Naive thymus-derived CD4-positive, alpha-beta T cell (primary cell): ENCODE measurements at regions of chr5 and their contacts with region 1.

Region 1: DNA sequence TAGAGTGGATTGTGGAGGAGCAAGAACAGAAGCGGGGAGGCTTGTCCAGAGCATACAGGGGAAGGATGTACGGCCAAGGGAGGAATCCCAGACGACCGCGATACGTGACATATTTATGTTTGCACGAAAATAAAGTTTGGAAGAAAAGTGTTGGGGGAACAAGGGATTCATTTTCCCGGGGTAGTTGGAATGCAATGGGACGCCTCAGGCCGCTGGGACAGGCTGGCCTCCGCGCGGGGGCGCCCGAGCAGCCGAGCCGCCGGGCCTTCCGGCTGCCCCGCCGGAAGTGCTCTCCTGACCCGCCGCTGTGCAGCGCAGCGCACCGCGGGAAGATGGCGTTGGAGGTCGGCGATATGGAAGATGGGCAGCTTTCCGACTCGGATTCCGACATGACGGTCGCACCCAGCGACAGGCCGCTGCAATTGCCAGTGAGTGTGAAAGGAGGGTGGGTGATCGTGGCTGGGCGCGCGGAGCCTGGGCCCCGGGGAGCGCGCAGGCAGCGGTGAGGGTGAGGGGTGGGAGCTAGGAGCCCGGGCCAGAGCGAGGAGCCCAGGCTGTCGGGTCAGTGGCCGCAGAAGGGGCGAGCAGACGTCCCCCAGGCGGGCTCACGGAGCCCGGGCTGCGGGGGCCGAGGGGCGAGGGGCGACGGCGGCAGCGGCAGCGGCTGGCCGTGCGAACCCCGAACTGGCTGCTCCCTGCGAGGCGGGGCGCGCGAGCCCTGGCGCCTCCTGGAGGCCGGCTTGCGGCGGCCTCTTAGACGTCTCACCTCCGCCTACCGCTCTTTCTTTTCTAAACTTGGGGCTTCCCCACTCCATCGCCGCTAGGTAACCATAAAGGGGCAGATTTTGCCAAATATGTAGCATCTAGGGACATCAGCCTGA is at the start of gene PHAX:
- DNase-seq: peak; percentile 59 to 82 (median 70)
- ATAC-seq: peak; percentile 95
- H3K4me3 ChIP-seq: peak within 1 kb of the TSS; percentile 84
- H3K4me3 Mint-ChIP-seq: peak within 1 kb of the TSS; percentile 84 to 99 (median 96)
- H3K27ac ChIP-seq: peak within 1 kb of the TSS; percentile 78
- H3K27ac Mint-ChIP-seq: peak within 1 kb of the TSS; percentile 86 to 98 (median 93)
- H3K4me1 ChIP-seq: peaks cover 14 to 15% of the 10 kb centered on the region in 2 donors
- H3K4me1 Mint-ChIP-seq: peaks cover 12 to 42% (median 35%) of the 10 kb centered on the region in 7 donors
- H3K27me3 ChIP-seq: no peaks in the 10 kb centered on the region
- H3K27me3 Mint-ChIP-seq: peaks cover 0 to 10% (median 0%) of the 10 kb centered on the region in 5 donors
- total RNA-seq, gene PHAX: 14.5 to 40.9 (median 35.4) TPM

Region 2: GRCh38 chr5:126354012-126354857 is 246.6 kb before region 1 on chr5:
- CTCF ChIA-PET with region 1: interaction called, 6 read pairs
- POLR2A ChIA-PET with region 1: no interaction called
- intact Hi-C with region 1: loop called (anchors 1 kb)
- DNase-seq: peak in 7 of 9 donors; percentile 26 to 66 (median 53)
- ATAC-seq: peak; percentile 78
- H3K4me3 ChIP-seq: no peak overlapping the region
- H3K4me3 Mint-ChIP-seq: peak overlapping the region; percentile 12 to 80 (median 72)
- H3K27ac ChIP-seq: no peak overlapping the region
- H3K27ac Mint-ChIP-seq: peak overlapping the region in 7 of 9 donors; percentile 19 to 65 (median 36)
- H3K4me1 ChIP-seq: peaks cover 0 to 12% of the 10 kb centered on the region in 2 donors
- H3K4me1 Mint-ChIP-seq: peaks cover 3 to 21% (median 15%) of the 10 kb centered on the region in 7 donors
- H3K27me3 ChIP-seq: no peaks in the 10 kb centered on the region
- H3K27me3 Mint-ChIP-seq: peaks cover 0 to 16% (median 0%) of the 10 kb centered on the region in 5 donors

Region 3: DNA sequence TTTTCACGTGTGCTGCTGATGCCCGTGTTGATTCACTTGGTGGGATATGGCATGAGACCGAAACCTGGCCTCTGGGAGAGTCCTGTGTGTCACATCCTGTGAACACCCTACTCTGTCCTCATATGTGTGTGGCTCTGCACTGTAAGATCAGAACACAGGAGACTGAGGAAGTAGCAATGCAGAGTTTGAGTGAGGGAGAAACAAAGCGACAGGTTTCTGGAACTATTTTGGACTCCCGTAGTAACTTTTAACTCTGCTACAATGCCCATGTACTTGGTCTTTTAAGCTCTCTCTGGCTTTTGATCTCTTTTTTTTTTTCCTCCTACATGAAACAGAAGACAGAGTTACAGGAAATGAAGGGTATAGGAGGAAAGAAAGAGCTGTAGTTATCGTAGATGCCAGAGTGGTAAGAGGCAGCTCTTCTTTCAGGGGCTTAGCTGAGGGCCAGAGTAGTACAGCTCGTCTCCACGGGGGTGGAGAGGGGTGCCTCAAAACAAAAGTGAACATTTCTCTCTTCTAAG is 151.1 kb before region 1 on chr5:
- CTCF ChIA-PET with region 1: interaction called, 8 read pairs
- POLR2A ChIA-PET with region 1: interaction called, 3 read pairs
- intact Hi-C with region 1: loop called in 1 of 2 experiments (anchors 2 kb)
- DNase-seq: peak in 8 of 9 donors; percentile 48 to 75 (median 64)
- ATAC-seq: peak; percentile 87
- H3K4me3 ChIP-seq: peak overlapping the region; percentile 47
- H3K4me3 Mint-ChIP-seq: peak overlapping the region; percentile 75 to 94 (median 88)
- H3K27ac ChIP-seq: peak overlapping the region; percentile 77
- H3K27ac Mint-ChIP-seq: peak overlapping the region; percentile 96 to 100 (median 99)
- H3K4me1 ChIP-seq: peaks cover 11 to 57% of the 10 kb centered on the region in 2 donors
- H3K4me1 Mint-ChIP-seq: peaks cover 32 to 90% (median 75%) of the 10 kb centered on the region in 7 donors
- H3K27me3 ChIP-seq: no peaks in the 10 kb centered on the region
- H3K27me3 Mint-ChIP-seq: no peaks in the 10 kb centered on the region

Region 4: DNA sequence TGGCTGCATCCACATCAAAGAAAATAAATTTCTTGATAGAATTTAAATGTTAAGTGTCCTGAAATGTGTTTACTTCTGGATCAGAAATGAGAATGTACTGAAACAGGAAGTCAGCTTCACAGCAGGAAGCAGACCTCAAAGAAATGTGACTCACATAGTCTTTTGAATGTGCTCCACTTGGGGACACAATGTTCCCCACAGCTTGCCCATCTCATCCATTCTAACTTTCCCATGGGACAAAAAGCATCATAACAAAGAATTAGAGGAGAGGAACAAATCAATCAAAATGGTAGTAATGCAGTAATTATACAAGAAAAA is 92.0 kb before region 1 on chr5:
- CTCF ChIA-PET with region 1: no interaction called
- POLR2A ChIA-PET with region 1: no interaction called
- intact Hi-C with region 1: loop called in 1 of 2 experiments (anchors 2 kb)
- DNase-seq: peak in 6 of 9 donors; percentile 17 to 68 (median 49)
- ATAC-seq: peak; percentile 81
- H3K4me3 ChIP-seq: peak overlapping the region; percentile 11
- H3K4me3 Mint-ChIP-seq: peak overlapping the region; percentile 36 to 91 (median 83)
- H3K27ac ChIP-seq: peak overlapping the region; percentile 64
- H3K27ac Mint-ChIP-seq: peak overlapping the region; percentile 77 to 97 (median 93)
- H3K4me1 ChIP-seq: peaks cover 5 to 39% of the 10 kb centered on the region in 2 donors
- H3K4me1 Mint-ChIP-seq: peaks cover 11 to 75% (median 65%) of the 10 kb centered on the region in 7 donors
- H3K27me3 ChIP-seq: no peaks in the 10 kb centered on the region
- H3K27me3 Mint-ChIP-seq: no peaks in the 10 kb centered on the region

Region 5: GRCh38 chr5:126852091-126852571 is 251.3 kb after region 1 on chr5:
- CTCF ChIA-PET with region 1: no interaction called
- POLR2A ChIA-PET with region 1: no interaction called
- intact Hi-C with region 1: loop called in 1 of 2 experiments (anchors 2 kb)
- DNase-seq: peak in 7 of 9 donors; percentile 38 to 72 (median 63)
- ATAC-seq: peak; percentile 81
- H3K4me3 ChIP-seq: peak overlapping the region; percentile 13
- H3K4me3 Mint-ChIP-seq: peak overlapping the region; percentile 71 to 91 (median 84)
- H3K27ac ChIP-seq: peak overlapping the region; percentile 67
- H3K27ac Mint-ChIP-seq: peak overlapping the region; percentile 95 to 99 (median 99)
- H3K4me1 ChIP-seq: peaks cover 12 to 33% of the 10 kb centered on the region in 2 donors
- H3K4me1 Mint-ChIP-seq: peaks cover 23 to 76% (median 67%) of the 10 kb centered on the region in 7 donors
- H3K27me3 ChIP-seq: no peaks in the 10 kb centered on the region
- H3K27me3 Mint-ChIP-seq: no peaks in the 10 kb centered on the region

Region 6: DNA sequence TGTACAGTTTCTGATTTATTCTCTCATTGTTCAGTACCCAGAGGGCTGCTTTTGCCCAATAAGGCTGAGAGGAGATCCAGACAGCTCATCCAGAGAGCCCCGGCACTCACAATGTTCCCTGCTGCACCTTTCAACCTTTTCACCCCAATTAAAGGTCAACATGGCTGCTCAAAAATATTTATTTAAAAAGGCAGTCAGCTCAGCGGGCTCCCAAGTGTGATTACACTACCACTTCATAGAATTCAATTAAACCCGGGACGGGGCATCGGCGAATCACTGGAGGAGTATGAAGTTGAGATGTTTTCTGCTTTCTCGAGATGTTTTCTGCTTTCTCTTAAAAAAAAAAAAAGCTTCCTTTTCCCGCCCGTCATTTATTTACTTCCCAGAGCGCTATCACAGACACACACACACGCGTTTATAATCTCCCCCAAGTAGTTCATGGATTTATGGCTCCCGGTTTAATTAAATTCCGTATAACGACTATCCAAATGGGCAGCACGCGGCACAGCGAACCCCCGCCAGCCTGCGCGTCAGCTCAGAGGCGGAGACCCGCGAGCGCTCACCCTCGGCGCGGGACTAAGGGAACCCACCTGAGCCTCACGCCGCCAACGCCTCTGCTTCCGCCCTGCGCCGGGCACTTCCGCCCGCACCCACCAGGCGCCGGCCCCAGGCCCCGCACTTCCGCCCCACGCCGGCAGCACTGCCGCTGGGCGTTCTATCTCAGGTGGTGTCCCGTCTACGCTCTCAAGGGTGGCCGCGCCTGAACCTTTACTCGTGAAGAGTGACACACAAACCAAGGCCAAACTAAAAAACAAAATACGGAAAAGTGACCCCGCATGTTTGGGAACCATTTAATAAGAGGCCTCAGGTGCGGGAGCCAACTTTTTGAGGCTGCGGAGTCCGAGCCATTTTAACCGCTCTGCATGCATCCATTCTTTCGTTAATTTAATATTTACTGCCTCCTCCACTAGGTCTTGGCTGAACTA is 472.3 kb after region 1 on chr5 and contains the start of gene C5orf63:
- CTCF ChIA-PET with region 1: no interaction called
- POLR2A ChIA-PET with region 1: no interaction called
- intact Hi-C with region 1: loop called in 1 of 2 experiments (anchors 5 kb)
- DNase-seq: peak; percentile 41 to 78 (median 69)
- ATAC-seq: peak; percentile 91
- H3K4me3 ChIP-seq: peak within 1 kb of the TSS; percentile 83
- H3K4me3 Mint-ChIP-seq: peak within 1 kb of the TSS; percentile 89 to 100 (median 92)
- H3K27ac ChIP-seq: peak within 1 kb of the TSS; percentile 69
- H3K27ac Mint-ChIP-seq: peak within 1 kb of the TSS; percentile 74 to 98 (median 93)
- H3K4me1 ChIP-seq: peaks cover 8 to 10% of the 10 kb centered on the region in 2 donors
- H3K4me1 Mint-ChIP-seq: peaks cover 17 to 39% (median 29%) of the 10 kb centered on the region in 7 donors
- H3K27me3 ChIP-seq: no peaks in the 10 kb centered on the region
- H3K27me3 Mint-ChIP-seq: no peaks in the 10 kb centered on the region
- total RNA-seq, gene C5orf63: 9.2 to 20.7 (median 11.9) TPM

Region 7: GRCh38 chr5:127517480-127518318 is 916.8 kb after region 1 on chr5 and contains the start of gene PRRC1:
- CTCF ChIA-PET with region 1: no interaction called
- POLR2A ChIA-PET with region 1: no interaction called
- intact Hi-C with region 1: loop called (anchors 1 to 5 kb)
- DNase-seq: peak; percentile 63 to 80 (median 74)
- ATAC-seq: peak; percentile 99
- H3K4me3 ChIP-seq: peak within 1 kb of the TSS; percentile 94
- H3K4me3 Mint-ChIP-seq: peak within 1 kb of the TSS; percentile 87 to 92 (median 89)
- H3K27ac ChIP-seq: peak within 1 kb of the TSS; percentile 89
- H3K27ac Mint-ChIP-seq: peak within 1 kb of the TSS; percentile 48 to 91 (median 82)
- H3K4me1 ChIP-seq: peaks cover 0 to 18% of the 10 kb centered on the region in 2 donors
- H3K4me1 Mint-ChIP-seq: peaks cover 25 to 48% (median 38%) of the 10 kb centered on the region in 7 donors
- H3K27me3 ChIP-seq: no peaks in the 10 kb centered on the region
- H3K27me3 Mint-ChIP-seq: peaks cover under 1 to 7% (median 6%) of the 10 kb centered on the region in 5 donors
- total RNA-seq, gene PRRC1: 34.6 to 56.6 (median 49.4) TPM

Region 8: GRCh38 chr5:127536687-127537086 is 935.8 kb after region 1 on chr5:
- CTCF ChIA-PET with region 1: no interaction called
- POLR2A ChIA-PET with region 1: no interaction called
- intact Hi-C with region 1: no loop called
- DNase-seq: peak in 2 of 9 donors; percentile 3 to 9
- ATAC-seq: no peak
- H3K4me3 ChIP-seq: no peak overlapping the region
- H3K4me3 Mint-ChIP-seq: no peak overlapping the region
- H3K27ac ChIP-seq: no peak overlapping the region
- H3K27ac Mint-ChIP-seq: no peak overlapping the region
- H3K4me1 ChIP-seq: no peaks in the 10 kb centered on the region
- H3K4me1 Mint-ChIP-seq: peaks cover 0 to 26% (median 13%) of the 10 kb centered on the region in 7 donors
- H3K27me3 ChIP-seq: no peaks in the 10 kb centered on the region
- H3K27me3 Mint-ChIP-seq: no peaks in the 10 kb centered on the region

Region 9: DNA sequence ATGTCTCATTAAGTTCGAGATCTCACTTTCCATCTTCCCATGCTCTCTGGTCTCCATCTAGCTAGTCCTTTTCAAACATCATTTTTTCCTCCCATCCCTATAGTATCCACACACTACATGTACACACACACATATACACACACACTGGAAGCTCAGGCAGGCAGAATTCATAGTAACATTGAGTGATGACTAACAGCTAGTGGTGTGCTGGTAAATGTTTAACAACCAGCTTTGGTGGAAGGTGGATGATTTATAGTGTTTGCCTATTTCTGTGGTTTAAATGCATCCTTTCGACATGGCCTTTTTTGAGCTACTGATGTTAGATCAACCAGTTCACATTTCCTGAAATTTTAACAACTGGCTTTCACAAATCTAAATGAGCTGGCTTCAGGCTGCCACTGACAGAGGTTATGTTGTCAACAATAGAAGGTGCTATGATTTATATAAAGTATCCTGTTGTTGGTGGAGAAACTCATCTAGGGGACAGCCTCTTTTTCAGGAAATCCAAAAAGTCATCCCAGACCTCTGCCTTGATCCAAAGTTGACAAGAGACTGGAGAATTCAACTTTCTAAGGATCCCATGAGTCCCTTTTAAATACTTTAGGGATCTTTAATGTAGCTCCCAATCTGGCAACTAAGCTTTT is 1220.2 kb after region 1 on chr5:
- CTCF ChIA-PET with region 1: no interaction called
- POLR2A ChIA-PET with region 1: no interaction called
- intact Hi-C with region 1: no loop called
- DNase-seq: no peak
- ATAC-seq: no peak
- H3K4me3 ChIP-seq: no peak overlapping the region
- H3K4me3 Mint-ChIP-seq: no peak overlapping the region
- H3K27ac ChIP-seq: no peak overlapping the region
- H3K27ac Mint-ChIP-seq: no peak overlapping the region
- H3K4me1 ChIP-seq: no peaks in the 10 kb centered on the region
- H3K4me1 Mint-ChIP-seq: peaks cover 0 to 4% (median 0%) of the 10 kb centered on the region in 7 donors
- H3K27me3 ChIP-seq: no peaks in the 10 kb centered on the region
- H3K27me3 Mint-ChIP-seq: peaks cover 5 to 18% (median 14%) of the 10 kb centered on the region in 5 donors